ENCODE measurements at regions of chr5 and their contacts with region 1.

Region 1: GRCh38 chr5:80255732-80256479 is at the start of gene SERINC5:
- DNase-seq: no peak
- ATAC-seq: peak; percentile 90
- H3K4me3 ChIP-seq: peak within 1 kb of the TSS; percentile 90 to 93
- H3K27ac ChIP-seq: peak within 1 kb of the TSS; percentile 99
- H3K4me1 ChIP-seq: peaks cover 26% of the 10 kb centered on the region
- H3K27me3 ChIP-seq: no peaks in the 10 kb centered on the region
- CTCF ChIP-seq: no peak
- total RNA-seq, gene SERINC5: 70.6 TPM

Region 2: GRCh38 chr5:80216753-80217596 is 38.9 kb before region 1 on chr5:
- CTCF ChIA-PET with region 1: no interaction called
- POLR2A ChIA-PET with region 1: interaction called, 13 read pairs
- in situ Hi-C with region 1: no loop called
- intact Hi-C with region 1: no loop called
- DNase-seq: no peak
- ATAC-seq: 0 out of 2 replicates have a peak, but pooled peaks have one; percentile 20
- H3K4me3 ChIP-seq: no peak overlapping the region
- H3K27ac ChIP-seq: no peak overlapping the region
- H3K4me1 ChIP-seq: peaks cover 16% of the 10 kb centered on the region
- H3K27me3 ChIP-seq: no peaks in the 10 kb centered on the region
- CTCF ChIP-seq: no peak

Region 3: DNA sequence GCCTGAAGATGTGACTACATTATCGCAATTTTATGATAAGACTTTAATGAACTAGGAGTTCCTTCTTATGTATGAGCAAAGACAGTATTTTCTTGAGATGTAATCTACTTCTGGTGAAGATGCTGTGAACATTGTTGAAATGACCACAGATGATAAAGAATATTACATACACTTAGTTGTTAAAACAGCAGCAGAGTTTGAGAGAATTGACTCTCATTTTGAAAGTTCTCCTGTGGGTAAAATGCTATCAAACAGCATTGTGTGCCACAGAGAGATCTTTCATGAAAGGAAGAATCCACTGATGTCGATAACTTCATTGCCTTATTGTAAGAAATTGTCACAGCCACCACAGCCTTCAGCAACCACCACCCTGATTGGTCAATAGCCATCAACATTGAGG is 240.0 kb after region 1 on chr5:
- CTCF ChIA-PET with region 1: no interaction called
- POLR2A ChIA-PET with region 1: interaction called, 13 read pairs
- in situ Hi-C with region 1: no loop called
- intact Hi-C with region 1: no loop called
- DNase-seq: no peak
- ATAC-seq: no peak
- H3K4me3 ChIP-seq: no peak overlapping the region
- H3K27ac ChIP-seq: no peak overlapping the region
- H3K4me1 ChIP-seq: no peaks in the 10 kb centered on the region
- H3K27me3 ChIP-seq: no peaks in the 10 kb centered on the region
- CTCF ChIP-seq: no peak

Region 4: GRCh38 chr5:81020478-81021174 is 764.7 kb after region 1 on chr5:
- CTCF ChIA-PET with region 1: no interaction called
- POLR2A ChIA-PET with region 1: interaction called, 12 read pairs
- in situ Hi-C with region 1: no loop called
- intact Hi-C with region 1: no loop called
- DNase-seq: no peak
- ATAC-seq: peak; percentile 41; the same call in 1 of the 2 replicates
- H3K4me3 ChIP-seq: no peak overlapping the region
- H3K27ac ChIP-seq: no peak overlapping the region
- H3K4me1 ChIP-seq: no peaks in the 10 kb centered on the region
- H3K27me3 ChIP-seq: no peaks in the 10 kb centered on the region
- CTCF ChIP-seq: no peak

Measured in Panc1 (cell line).